Endothelial cell of umbilical vein (primary cell): ENCODE measurements at regions of chr7 and their contacts with region 1.

Region 1: GRCh38 chr7:24842449-24843241 is 85.4 kb upstream of the GSDME start:
- DNase-seq: peak; percentile 85
- H3K4me3 ChIP-seq: peak overlapping the region in 1 of 3 experiments; percentile 24
- H3K27ac ChIP-seq: peak overlapping the region; percentile 89
- H3K4me1 ChIP-seq: peaks cover 32% of the 10 kb centered on the region
- H3K27me3 ChIP-seq: no peaks in the 10 kb centered on the region
- CTCF ChIP-seq: no peak
- POLR2A ChIP-seq: no peak

Region 2: GRCh38 chr7:24882989-24883621 is 40.5 kb after region 1 on chr7:
- CTCF ChIA-PET with region 1: interaction called, 3 read pairs
- POLR2A ChIA-PET with region 1: no interaction called
- dilution Hi-C with region 1: no loop called
- intact Hi-C with region 1: loop called (anchors 2 kb)
- DNase-seq: peak; percentile 67
- H3K4me3 ChIP-seq: no peak overlapping the region
- H3K27ac ChIP-seq: peak overlapping the region; percentile 23
- H3K4me1 ChIP-seq: peaks cover 47% of the 10 kb centered on the region
- H3K27me3 ChIP-seq: no peaks in the 10 kb centered on the region
- CTCF ChIP-seq: no peak
- POLR2A ChIP-seq: no peak

Region 3: DNA sequence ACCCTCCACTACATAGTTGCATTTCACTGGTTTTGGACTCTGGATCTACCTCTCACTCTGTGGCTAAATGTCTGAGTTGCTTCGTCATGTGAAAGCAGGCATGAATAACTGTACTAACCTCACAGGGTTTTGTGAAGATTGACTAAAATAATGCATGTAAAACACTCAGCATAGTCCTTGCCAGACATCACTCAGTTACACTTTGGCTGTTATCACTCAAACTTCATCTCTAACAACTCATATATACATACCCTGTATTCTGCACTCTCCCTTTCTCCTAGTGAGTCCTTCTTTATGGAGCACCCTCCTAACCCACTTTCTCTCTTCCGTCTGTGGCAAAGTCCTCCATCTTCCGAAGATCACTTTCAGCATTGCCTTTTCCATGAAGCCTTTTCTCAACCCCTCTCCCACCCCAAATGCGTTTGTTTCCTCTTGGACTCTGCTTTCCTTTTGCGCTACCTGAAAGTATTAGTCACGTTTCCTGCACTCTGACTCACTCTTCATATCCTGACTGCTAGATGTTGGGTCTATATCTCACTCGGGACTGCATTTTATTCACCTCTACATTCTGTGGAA is 64.8 kb after region 1 on chr7:
- CTCF ChIA-PET with region 1: no interaction called
- POLR2A ChIA-PET with region 1: no interaction called
- dilution Hi-C with region 1: no loop called
- intact Hi-C with region 1: loop called (anchors 5 kb)
- DNase-seq: peak; percentile 89
- H3K4me3 ChIP-seq: peak overlapping the region in 1 of 3 experiments; percentile 28
- H3K27ac ChIP-seq: peak overlapping the region; percentile 90
- H3K4me1 ChIP-seq: peaks cover 61% of the 10 kb centered on the region
- H3K27me3 ChIP-seq: no peaks in the 10 kb centered on the region
- CTCF ChIP-seq: no peak
- POLR2A ChIP-seq: no peak

Region 4: GRCh38 chr7:25069900-25070443 is 227.3 kb after region 1 on chr7:
- CTCF ChIA-PET with region 1: interaction called, 6 read pairs
- POLR2A ChIA-PET with region 1: no interaction called
- dilution Hi-C with region 1: no loop called
- intact Hi-C with region 1: loop called (anchors 1 kb)
- DNase-seq: peak; percentile 70
- H3K4me3 ChIP-seq: no peak overlapping the region
- H3K27ac ChIP-seq: no peak overlapping the region
- H3K4me1 ChIP-seq: no peaks in the 10 kb centered on the region
- H3K27me3 ChIP-seq: peaks cover 0 to 2% of the 10 kb centered on the region in 2 experiments
- CTCF ChIP-seq: peak; percentile 65 to 73
- POLR2A ChIP-seq: no peak

Region 5: GRCh38 chr7:25586513-25586912 is 743.9 kb after region 1 on chr7:
- CTCF ChIA-PET with region 1: no interaction called
- POLR2A ChIA-PET with region 1: no interaction called
- dilution Hi-C with region 1: no loop called
- intact Hi-C with region 1: no loop called
- DNase-seq: no peak
- H3K4me3 ChIP-seq: no peak overlapping the region
- H3K27ac ChIP-seq: no peak overlapping the region
- H3K4me1 ChIP-seq: no peaks in the 10 kb centered on the region
- H3K27me3 ChIP-seq: no peaks in the 10 kb centered on the region
- CTCF ChIP-seq: no peak
- POLR2A ChIP-seq: no peak